K562 (cell line): ENCODE measurements at regions of chr11 and their contacts with region 1.

Region 1: DNA sequence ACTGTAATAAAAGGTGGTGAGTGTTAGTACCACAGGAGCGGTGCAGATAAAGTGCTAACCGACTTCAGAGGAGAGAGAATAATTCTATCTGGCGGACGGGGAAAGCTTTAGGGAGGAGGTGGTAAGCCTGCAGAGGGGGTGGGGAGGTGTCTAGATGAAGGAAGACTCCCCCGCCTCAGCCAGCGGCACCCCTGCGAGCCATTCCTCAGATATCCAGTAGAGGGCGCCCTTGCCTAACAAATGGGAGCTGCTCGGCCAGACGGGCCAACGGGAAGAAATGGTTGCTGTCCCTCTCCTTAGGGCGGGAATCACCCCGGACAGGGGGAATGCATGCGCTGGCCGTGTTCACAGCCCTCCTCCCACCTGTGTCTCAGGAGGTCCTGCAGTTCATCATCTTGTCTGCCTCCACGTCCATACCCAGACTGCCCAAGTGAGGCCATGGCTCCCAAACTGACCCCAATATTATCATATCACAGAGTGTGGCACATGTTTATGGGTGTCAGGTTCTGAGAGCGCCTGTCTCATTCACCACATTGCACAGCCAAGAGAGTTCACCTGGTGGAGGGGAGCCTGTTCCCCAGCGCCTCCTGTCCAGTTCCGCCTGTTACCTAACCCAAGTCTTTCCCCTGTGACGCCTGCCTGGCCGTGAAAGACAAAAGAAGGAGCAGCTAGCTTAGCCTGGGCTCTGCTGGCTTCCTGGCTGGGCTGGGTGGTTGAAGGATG is 85.5 kb downstream of the ST3GAL4 start:
- DNase-seq: peak; percentile 87 to 96 (median 94)
- ATAC-seq: peak; percentile 96
- H3K4me3 ChIP-seq: no peak overlapping the region
- H3K27ac ChIP-seq: no peak overlapping the region
- H3K4me1 ChIP-seq: peaks cover 0 to 4% of the 10 kb centered on the region in 2 experiments; a peak in 4 of 5 replicates
- H3K27me3 ChIP-seq: peaks cover 4 to 42% of the 10 kb centered on the region in 2 experiments; a peak in 3 of 5 replicates
- CTCF ChIP-seq: peak; percentile 89 to 91 (median 90)
- EP300 ChIP-seq: no peak
- POLR2A ChIP-seq: no peak
- RAD21 ChIP-seq: peak; percentile 91 to 95

Region 2: GRCh38 chr11:126465573-126466188 is 24.7 kb after region 1 on chr11:
- CTCF ChIA-PET with region 1: no interaction called
- POLR2A ChIA-PET with region 1: interaction called, 3 read pairs
- in situ Hi-C with region 1: no loop called
- intact Hi-C with region 1: loop called (anchors 1 kb)
- DNase-seq: no peak
- ATAC-seq: no peak
- H3K4me3 ChIP-seq: no peak overlapping the region
- H3K27ac ChIP-seq: no peak overlapping the region
- H3K4me1 ChIP-seq: no peaks in the 10 kb centered on the region
- H3K27me3 ChIP-seq: peaks cover 15 to 90% of the 10 kb centered on the region in 2 experiments; a peak in 4 of 5 replicates
- CTCF ChIP-seq: no peak
- EP300 ChIP-seq: no peak
- POLR2A ChIP-seq: no peak
- RAD21 ChIP-seq: no peak

Region 3: DNA sequence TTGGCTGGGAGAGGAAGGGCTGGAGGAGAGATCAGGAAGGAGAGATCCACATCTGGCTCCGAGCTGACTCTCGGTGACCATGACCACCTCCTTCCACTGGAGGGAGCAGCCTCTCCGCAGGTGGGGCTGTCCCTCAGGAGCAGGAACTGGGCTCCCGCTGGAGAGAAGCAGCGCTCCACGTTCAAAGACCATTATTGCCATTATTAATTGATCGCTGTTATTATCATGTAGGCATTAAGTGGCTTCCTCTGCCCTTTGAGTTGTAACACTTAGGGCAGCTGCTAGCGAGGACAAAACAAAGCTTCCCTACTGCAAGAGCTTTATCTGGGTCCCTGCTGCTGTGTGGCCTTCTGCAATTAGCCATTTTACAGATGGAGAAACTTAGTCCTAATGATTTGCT is 166.4 kb after region 1 on chr11:
- CTCF ChIA-PET with region 1: no interaction called
- POLR2A ChIA-PET with region 1: no interaction called
- in situ Hi-C with region 1: no loop called
- intact Hi-C with region 1: loop called (anchors 10 kb)
- DNase-seq: peak; percentile 56 to 79 (median 74)
- ATAC-seq: peak; percentile 98
- H3K4me3 ChIP-seq: no peak overlapping the region
- H3K27ac ChIP-seq: no peak overlapping the region
- H3K4me1 ChIP-seq: no peaks in the 10 kb centered on the region
- H3K27me3 ChIP-seq: peaks cover 9 to 31% of the 10 kb centered on the region in 2 experiments
- CTCF ChIP-seq: peak; percentile 78 to 83 (median 80)
- EP300 ChIP-seq: no peak
- POLR2A ChIP-seq: no peak
- RAD21 ChIP-seq: peak; percentile 50 to 84

Region 4: GRCh38 chr11:127052404-127052803 is 611.5 kb after region 1 on chr11:
- CTCF ChIA-PET with region 1: no interaction called
- POLR2A ChIA-PET with region 1: no interaction called
- in situ Hi-C with region 1: no loop called
- intact Hi-C with region 1: no loop called
- DNase-seq: no peak
- ATAC-seq: no peak
- H3K4me3 ChIP-seq: no peak overlapping the region
- H3K27ac ChIP-seq: no peak overlapping the region
- H3K4me1 ChIP-seq: no peaks in the 10 kb centered on the region
- H3K27me3 ChIP-seq: no peaks in the 10 kb centered on the region
- CTCF ChIP-seq: no peak
- EP300 ChIP-seq: no peak
- POLR2A ChIP-seq: no peak
- RAD21 ChIP-seq: no peak

Region 5: DNA sequence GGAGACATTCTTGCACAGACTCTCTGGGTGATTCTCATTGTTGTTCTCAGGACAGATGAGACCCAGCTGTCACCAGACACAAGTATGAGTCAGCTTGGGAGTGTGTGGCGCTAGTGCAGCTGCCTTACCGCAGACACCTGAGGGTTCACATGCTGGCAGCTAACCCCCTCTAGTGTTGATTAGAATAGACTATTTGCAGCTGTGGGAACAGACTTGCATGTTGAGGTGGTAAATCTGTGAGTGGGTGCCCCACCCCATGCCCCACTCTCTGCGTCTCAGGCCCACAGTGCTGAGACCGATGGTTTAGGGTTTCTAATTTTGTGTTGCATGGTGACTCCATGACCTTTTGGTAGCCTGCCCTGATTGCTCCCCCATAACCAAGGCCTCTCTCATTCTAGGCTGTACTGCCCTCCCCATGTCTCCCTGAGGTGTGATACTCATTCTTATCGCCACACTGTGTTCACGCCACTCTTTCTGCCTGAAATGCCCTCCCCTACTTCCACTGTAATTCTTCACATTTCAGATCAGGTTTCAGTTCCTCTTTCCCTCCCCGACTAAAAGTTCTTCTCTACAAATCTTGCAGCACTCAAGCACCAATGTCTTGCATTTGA is 633.3 kb after region 1 on chr11:
- CTCF ChIA-PET with region 1: no interaction called
- POLR2A ChIA-PET with region 1: no interaction called
- in situ Hi-C with region 1: no loop called
- intact Hi-C with region 1: loop called (anchors 5 kb)
- DNase-seq: peak; percentile 15 to 39 (median 20)
- ATAC-seq: peak; percentile 84
- H3K4me3 ChIP-seq: no peak overlapping the region
- H3K27ac ChIP-seq: no peak overlapping the region
- H3K4me1 ChIP-seq: no peaks in the 10 kb centered on the region
- H3K27me3 ChIP-seq: no peaks in the 10 kb centered on the region
- CTCF ChIP-seq: peak; percentile 44 to 51 (median 50); a peak in 5 of 6 replicates
- EP300 ChIP-seq: no peak
- POLR2A ChIP-seq: no peak
- RAD21 ChIP-seq: peak in 1 of 2 experiments; percentile 39; a peak in 2 of 4 replicates

Region 6: GRCh38 chr11:128157423-128158298 is 1716.7 kb after region 1 on chr11:
- CTCF ChIA-PET with region 1: interaction called, 3 read pairs
- POLR2A ChIA-PET with region 1: no interaction called
- in situ Hi-C with region 1: no loop called
- intact Hi-C with region 1: loop called (anchors 5 kb)
- DNase-seq: peak; percentile 22 to 60 (median 54)
- ATAC-seq: peak; percentile 69; the same call in 2 of the 3 replicates
- H3K4me3 ChIP-seq: no peak overlapping the region
- H3K27ac ChIP-seq: no peak overlapping the region
- H3K4me1 ChIP-seq: no peaks in the 10 kb centered on the region
- H3K27me3 ChIP-seq: no peaks in the 10 kb centered on the region
- CTCF ChIP-seq: peak; percentile 46 to 62 (median 61); a peak in 5 of 6 replicates
- EP300 ChIP-seq: no peak
- POLR2A ChIP-seq: no peak
- RAD21 ChIP-seq: peak; percentile 51 to 65